ENCODE measurements at regions of chr6 and their contacts with region 1.

Region 1: GRCh38 chr6:1596088-1596852 is 13.4 kb upstream of the FOXC1 start:
- DNase-seq: peak; percentile 77
- ATAC-seq: peak; percentile 86
- H3K4me3 ChIP-seq: no peak overlapping the region
- H3K4me3 Mint-ChIP-seq: no peak overlapping the region
- H3K27ac ChIP-seq: no peak overlapping the region
- H3K27ac Mint-ChIP-seq: no peak overlapping the region
- H3K4me1 ChIP-seq: peaks cover 3 to 5% of the 10 kb centered on the region in 2 donors
- H3K4me1 Mint-ChIP-seq: no peaks in the 10 kb centered on the region
- H3K27me3 ChIP-seq: peaks cover 0 to 35% (median 17%) of the 10 kb centered on the region in 4 experiments
- H3K27me3 Mint-ChIP-seq: peaks cover 60% of the 10 kb centered on the region
- CTCF ChIP-seq: peak; percentile 97

Region 2: GRCh38 chr6:1624851-1625781 is 28.8 kb after region 1 on chr6:
- CTCF ChIA-PET with region 1: interaction called, 15 read pairs
- POLR2A ChIA-PET with region 1: no interaction called
- intact Hi-C with region 1: no loop called
- DNase-seq: peak; percentile 59
- ATAC-seq: peak; percentile 34
- H3K4me3 ChIP-seq: peak overlapping the region; percentile 28 to 69 (median 37)
- H3K4me3 Mint-ChIP-seq: peak overlapping the region; percentile 88
- H3K27ac ChIP-seq: no peak overlapping the region
- H3K27ac Mint-ChIP-seq: no peak overlapping the region
- H3K4me1 ChIP-seq: peaks cover 28 to 32% of the 10 kb centered on the region in 2 donors
- H3K4me1 Mint-ChIP-seq: peaks cover 18% of the 10 kb centered on the region
- H3K27me3 ChIP-seq: peaks cover 0 to 80% (median 57%) of the 10 kb centered on the region in 4 experiments
- H3K27me3 Mint-ChIP-seq: peaks cover 65% of the 10 kb centered on the region
- CTCF ChIP-seq: no peak

Region 3: DNA sequence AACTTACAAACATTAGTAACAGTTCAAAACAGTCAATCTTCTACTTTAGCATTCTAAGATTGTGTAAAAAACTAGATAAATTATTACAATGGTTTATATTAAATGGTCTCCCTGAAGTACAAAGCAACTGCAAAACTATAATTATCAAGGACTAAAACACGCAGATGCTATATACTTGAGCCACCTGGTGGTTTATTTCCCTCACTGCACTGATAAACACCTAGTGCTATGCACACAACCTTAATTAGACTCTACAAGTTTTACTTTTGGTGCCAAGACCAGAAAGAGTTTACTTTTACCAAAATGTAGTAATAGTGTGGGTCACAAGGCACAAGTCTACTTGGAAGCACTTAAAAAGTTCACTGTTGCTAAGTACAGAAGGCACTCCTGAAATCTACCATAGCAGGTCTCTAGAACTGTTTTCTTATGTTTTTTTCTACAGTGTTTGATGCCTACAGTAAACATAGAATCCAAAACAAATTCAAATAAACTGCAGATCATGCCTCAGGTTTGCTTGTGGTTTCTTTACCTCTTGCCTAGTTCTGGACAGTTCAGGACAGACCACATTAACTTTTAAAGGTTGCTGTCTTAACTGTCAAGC is 599.9 kb after region 1 on chr6:
- CTCF ChIA-PET with region 1: interaction called, 30 read pairs
- POLR2A ChIA-PET with region 1: no interaction called
- intact Hi-C with region 1: loop called (anchors 2 kb)
- DNase-seq: peak; percentile 67
- ATAC-seq: peak; percentile 73
- H3K4me3 ChIP-seq: no peak overlapping the region
- H3K4me3 Mint-ChIP-seq: no peak overlapping the region
- H3K27ac ChIP-seq: no peak overlapping the region
- H3K27ac Mint-ChIP-seq: no peak overlapping the region
- H3K4me1 ChIP-seq: peaks cover 10 to 11% of the 10 kb centered on the region in 2 donors
- H3K4me1 Mint-ChIP-seq: peaks cover 2% of the 10 kb centered on the region
- H3K27me3 ChIP-seq: no peaks in the 10 kb centered on the region
- H3K27me3 Mint-ChIP-seq: no peaks in the 10 kb centered on the region
- CTCF ChIP-seq: peak; percentile 97

Region 4: GRCh38 chr6:2353412-2354137 is 757.3 kb after region 1 on chr6:
- CTCF ChIA-PET with region 1: interaction called, 62 read pairs
- POLR2A ChIA-PET with region 1: no interaction called
- intact Hi-C with region 1: loop called (anchors 2 kb)
- DNase-seq: peak; percentile 63
- ATAC-seq: no peak
- H3K4me3 ChIP-seq: no peak overlapping the region
- H3K4me3 Mint-ChIP-seq: no peak overlapping the region
- H3K27ac ChIP-seq: no peak overlapping the region
- H3K27ac Mint-ChIP-seq: no peak overlapping the region
- H3K4me1 ChIP-seq: no peaks in the 10 kb centered on the region
- H3K4me1 Mint-ChIP-seq: no peaks in the 10 kb centered on the region
- H3K27me3 ChIP-seq: no peaks in the 10 kb centered on the region
- H3K27me3 Mint-ChIP-seq: no peaks in the 10 kb centered on the region
- CTCF ChIP-seq: peak; percentile 87

Region 5: GRCh38 chr6:2634139-2634964 is 1038.1 kb after region 1 on chr6:
- CTCF ChIA-PET with region 1: interaction called, 143 read pairs
- POLR2A ChIA-PET with region 1: no interaction called
- intact Hi-C with region 1: loop called (anchors 1 kb)
- DNase-seq: peak; percentile 83
- ATAC-seq: peak; percentile 96
- H3K4me3 ChIP-seq: peak overlapping the region in 4 of 5 experiments; percentile 34 to 63 (median 48)
- H3K4me3 Mint-ChIP-seq: peak overlapping the region; percentile 80
- H3K27ac ChIP-seq: no peak overlapping the region
- H3K27ac Mint-ChIP-seq: peak overlapping the region; percentile 26
- H3K4me1 ChIP-seq: peaks cover 5 to 10% of the 10 kb centered on the region in 2 donors
- H3K4me1 Mint-ChIP-seq: peaks cover 6% of the 10 kb centered on the region
- H3K27me3 ChIP-seq: peaks cover 0 to 5% (median under 1%) of the 10 kb centered on the region in 4 experiments
- H3K27me3 Mint-ChIP-seq: peaks cover 18% of the 10 kb centered on the region
- CTCF ChIP-seq: peak; percentile 97

Region 6: GRCh38 chr6:2749969-2750600 is 1153.8 kb after region 1 on chr6:
- CTCF ChIA-PET with region 1: interaction called, 25 read pairs
- POLR2A ChIA-PET with region 1: no interaction called
- intact Hi-C with region 1: loop called (anchors 1 kb)
- DNase-seq: peak; percentile 78
- ATAC-seq: peak; percentile 73
- H3K4me3 ChIP-seq: no peak overlapping the region
- H3K4me3 Mint-ChIP-seq: no peak overlapping the region
- H3K27ac ChIP-seq: no peak overlapping the region
- H3K27ac Mint-ChIP-seq: no peak overlapping the region
- H3K4me1 ChIP-seq: no peaks in the 10 kb centered on the region
- H3K4me1 Mint-ChIP-seq: peaks cover 7% of the 10 kb centered on the region
- H3K27me3 ChIP-seq: peaks cover 0 to 24% (median 14%) of the 10 kb centered on the region in 4 experiments
- H3K27me3 Mint-ChIP-seq: peaks cover 32% of the 10 kb centered on the region
- CTCF ChIP-seq: peak; percentile 93